Caco-2 (cell line): ENCODE measurements at regions of chr13 and their contacts with region 1.

Region 1: DNA sequence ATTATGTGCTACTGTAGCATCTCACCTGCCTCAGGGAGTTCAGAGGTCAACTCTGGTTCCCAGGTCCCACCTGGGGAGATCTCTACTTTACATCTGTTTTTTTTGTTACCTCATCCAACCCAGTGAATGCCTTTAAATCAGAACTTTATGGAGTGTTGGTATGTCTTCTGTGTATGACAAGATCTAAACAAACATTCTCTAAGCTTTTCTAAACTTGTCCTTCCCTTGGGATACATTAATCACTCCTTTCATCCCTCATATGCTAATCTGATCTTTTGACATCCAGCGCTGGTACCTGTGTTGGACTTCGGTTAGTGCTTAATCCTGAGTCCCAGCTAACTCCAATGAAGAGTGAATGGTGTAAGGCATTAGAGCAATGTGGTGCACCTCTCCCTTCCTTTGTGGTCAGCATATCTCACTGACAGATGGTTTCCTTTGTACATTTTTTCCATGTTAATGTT is 213.5 kb downstream of the ABCC4 start:
- DNase-seq: peak; percentile 83 to 87
- H3K4me3 ChIP-seq: no peak overlapping the region
- H3K4me3 Mint-ChIP-seq: no peak overlapping the region
- H3K27ac Mint-ChIP-seq: no peak overlapping the region
- H3K4me1 ChIP-seq: peaks cover 23% of the 10 kb centered on the region
- H3K4me1 Mint-ChIP-seq: peaks cover 19% of the 10 kb centered on the region
- H3K27me3 ChIP-seq: no peaks in the 10 kb centered on the region
- H3K27me3 Mint-ChIP-seq: no peaks in the 10 kb centered on the region
- CTCF ChIP-seq: no peak

Region 2: DNA sequence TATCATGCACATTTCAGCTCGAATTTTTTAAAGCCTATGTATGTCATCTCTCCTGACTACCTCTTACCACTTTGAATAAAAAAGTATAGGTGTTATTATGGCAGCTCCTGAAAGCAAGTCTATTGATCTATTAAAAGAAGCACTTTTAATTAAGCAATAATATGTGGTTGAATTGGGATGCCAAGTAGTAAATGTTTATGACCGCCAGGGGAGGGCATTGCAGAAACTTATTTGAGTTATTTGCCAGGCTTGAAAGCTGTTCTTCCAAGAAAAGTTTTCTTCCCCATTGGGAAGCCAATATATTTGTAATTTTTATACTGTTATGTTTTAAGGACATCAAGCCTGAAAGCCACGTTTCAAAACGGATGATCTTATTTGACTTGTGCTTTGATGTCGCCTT is 287.4 kb before region 1 on chr13:
- CTCF ChIA-PET with region 1: no interaction called
- POLR2A ChIA-PET with region 1: no interaction called
- intact Hi-C with region 1: no loop called
- DNase-seq: no peak
- H3K4me3 ChIP-seq: no peak overlapping the region
- H3K4me3 Mint-ChIP-seq: no peak overlapping the region
- H3K27ac Mint-ChIP-seq: no peak overlapping the region
- H3K4me1 ChIP-seq: no peaks in the 10 kb centered on the region
- H3K4me1 Mint-ChIP-seq: no peaks in the 10 kb centered on the region
- H3K27me3 ChIP-seq: no peaks in the 10 kb centered on the region
- H3K27me3 Mint-ChIP-seq: peaks cover 8% of the 10 kb centered on the region
- CTCF ChIP-seq: no peak

Region 3: GRCh38 chr13:94950303-94950702 is 137.5 kb before region 1 on chr13:
- CTCF ChIA-PET with region 1: no interaction called
- POLR2A ChIA-PET with region 1: no interaction called
- intact Hi-C with region 1: no loop called
- DNase-seq: peak in 1 of 2 experiments; percentile 22
- H3K4me3 ChIP-seq: no peak overlapping the region
- H3K4me3 Mint-ChIP-seq: no peak overlapping the region
- H3K27ac Mint-ChIP-seq: no peak overlapping the region
- H3K4me1 ChIP-seq: 0 out of 2 replicates have a peak, but pooled peaks cover 3% of the 10 kb centered on the region
- H3K4me1 Mint-ChIP-seq: no peaks in the 10 kb centered on the region
- H3K27me3 ChIP-seq: no peaks in the 10 kb centered on the region; the same call in 1 of the 2 replicates
- H3K27me3 Mint-ChIP-seq: peaks cover 19% of the 10 kb centered on the region
- CTCF ChIP-seq: peak in 1 of 2 experiments; percentile 53

Region 4: GRCh38 chr13:95123726-95124125 is 35.9 kb after region 1 on chr13:
- CTCF ChIA-PET with region 1: no interaction called
- POLR2A ChIA-PET with region 1: no interaction called
- intact Hi-C with region 1: loop called (anchors 1 kb)
- DNase-seq: peak; percentile 85 to 90
- H3K4me3 ChIP-seq: no peak overlapping the region
- H3K4me3 Mint-ChIP-seq: peak overlapping the region; percentile 41
- H3K27ac Mint-ChIP-seq: peak overlapping the region; percentile 78
- H3K4me1 ChIP-seq: peaks cover 49% of the 10 kb centered on the region
- H3K4me1 Mint-ChIP-seq: peaks cover 47% of the 10 kb centered on the region
- H3K27me3 ChIP-seq: no peaks in the 10 kb centered on the region
- H3K27me3 Mint-ChIP-seq: no peaks in the 10 kb centered on the region
- CTCF ChIP-seq: no peak

Region 5: DNA sequence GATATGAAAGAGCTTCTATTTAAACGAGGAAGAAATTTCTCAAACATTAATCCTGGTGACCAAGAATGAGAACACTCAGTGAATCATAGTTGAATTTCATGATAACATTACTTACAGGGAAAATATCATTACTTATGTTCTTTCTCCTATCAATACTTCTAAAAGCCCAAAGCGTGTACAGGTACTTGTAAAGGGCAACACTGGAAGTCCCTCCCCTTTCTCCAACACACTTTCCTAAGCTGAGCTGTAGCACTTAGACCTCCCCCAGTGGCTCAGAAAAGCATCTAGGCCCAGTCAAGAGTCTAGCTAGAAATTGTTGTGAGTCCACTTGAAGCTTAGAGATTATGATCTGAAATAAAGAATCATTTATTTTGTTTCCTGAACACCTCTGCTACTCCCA is 62.8 kb after region 1 on chr13:
- CTCF ChIA-PET with region 1: no interaction called
- POLR2A ChIA-PET with region 1: interaction called, 3 read pairs
- intact Hi-C with region 1: loop called (anchors 2 kb)
- DNase-seq: no peak
- H3K4me3 ChIP-seq: no peak overlapping the region
- H3K4me3 Mint-ChIP-seq: no peak overlapping the region
- H3K27ac Mint-ChIP-seq: no peak overlapping the region
- H3K4me1 ChIP-seq: 0 out of 2 replicates have a peak, but pooled peaks cover 4% of the 10 kb centered on the region
- H3K4me1 Mint-ChIP-seq: peaks cover 7% of the 10 kb centered on the region
- H3K27me3 ChIP-seq: no peaks in the 10 kb centered on the region
- H3K27me3 Mint-ChIP-seq: no peaks in the 10 kb centered on the region
- CTCF ChIP-seq: no peak